Activated naive CD4-positive, alpha-beta T cell treated with anti-CD3 and anti-CD28 coated beads for 36 hours (primary cell): ENCODE measurements at regions of chr16 and their contacts with region 1.

Region 1: GRCh38 chr16:79269211-79269863 is 331.2 kb downstream of the MAF start:
- DNase-seq: peak; percentile 90
- H3K4me3 Mint-ChIP-seq: peak overlapping the region; percentile 30
- H3K27ac Mint-ChIP-seq: peak overlapping the region; percentile 89
- H3K4me1 Mint-ChIP-seq: peaks cover 78% of the 10 kb centered on the region
- H3K27me3 Mint-ChIP-seq: peaks cover 29% of the 10 kb centered on the region

Region 2: GRCh38 chr16:77308163-77308561 is 1961.2 kb before region 1 on chr16:
- CTCF ChIA-PET with region 1: no interaction called
- intact Hi-C with region 1: loop called (anchors 5 kb)
- DNase-seq: peak; percentile 10
- H3K4me3 Mint-ChIP-seq: no peak overlapping the region
- H3K27ac Mint-ChIP-seq: peak overlapping the region; percentile 83
- H3K4me1 Mint-ChIP-seq: peaks cover 19% of the 10 kb centered on the region
- H3K27me3 Mint-ChIP-seq: peaks cover 20% of the 10 kb centered on the region

Region 3: GRCh38 chr16:77816293-77816692 is 1453.0 kb before region 1 on chr16:
- CTCF ChIA-PET with region 1: no interaction called
- intact Hi-C with region 1: no loop called
- DNase-seq: no peak
- H3K4me3 Mint-ChIP-seq: no peak overlapping the region
- H3K27ac Mint-ChIP-seq: no peak overlapping the region
- H3K4me1 Mint-ChIP-seq: no peaks in the 10 kb centered on the region
- H3K27me3 Mint-ChIP-seq: peaks cover 12% of the 10 kb centered on the region

Region 4: GRCh38 chr16:79076047-79076767 is 193.1 kb before region 1 on chr16:
- CTCF ChIA-PET with region 1: no interaction called
- intact Hi-C with region 1: loop called (anchors 2 kb)
- DNase-seq: peak; percentile 33
- H3K4me3 Mint-ChIP-seq: peak overlapping the region; percentile 25
- H3K27ac Mint-ChIP-seq: peak overlapping the region; percentile 83
- H3K4me1 Mint-ChIP-seq: peaks cover 43% of the 10 kb centered on the region
- H3K27me3 Mint-ChIP-seq: peaks cover 7% of the 10 kb centered on the region

Region 5: GRCh38 chr16:79283578-79283977 is 14.2 kb after region 1 on chr16:
- CTCF ChIA-PET with region 1: interaction called, 14 read pairs
- intact Hi-C with region 1: loop called (anchors 1 kb)
- DNase-seq: peak; percentile 39
- H3K4me3 Mint-ChIP-seq: no peak overlapping the region
- H3K27ac Mint-ChIP-seq: no peak overlapping the region
- H3K4me1 Mint-ChIP-seq: peaks cover 71% of the 10 kb centered on the region
- H3K27me3 Mint-ChIP-seq: peaks cover 8% of the 10 kb centered on the region

Region 6: DNA sequence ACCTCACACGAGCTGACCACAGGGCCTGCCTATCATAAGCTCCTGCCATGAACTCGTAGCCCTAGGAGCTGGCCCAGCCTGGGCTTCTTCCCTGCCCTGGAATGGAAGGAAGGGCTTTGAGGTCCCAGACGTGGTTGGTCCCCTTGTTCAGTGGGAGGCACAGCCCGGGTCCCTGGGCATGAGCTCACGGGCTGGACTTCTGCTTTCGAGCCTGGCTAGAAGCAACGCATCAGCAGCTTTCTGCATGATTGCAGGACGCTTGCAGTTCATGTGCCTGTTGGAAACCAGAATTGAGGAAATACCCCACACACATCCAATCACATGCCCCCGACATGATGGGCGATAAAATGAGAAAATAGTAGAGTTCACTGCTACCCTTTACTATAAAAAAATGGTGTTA is 37.9 kb after region 1 on chr16:
- CTCF ChIA-PET with region 1: no interaction called
- intact Hi-C with region 1: no loop called
- DNase-seq: no peak
- H3K4me3 Mint-ChIP-seq: no peak overlapping the region
- H3K27ac Mint-ChIP-seq: no peak overlapping the region
- H3K4me1 Mint-ChIP-seq: peaks cover 8% of the 10 kb centered on the region
- H3K27me3 Mint-ChIP-seq: peaks cover 16% of the 10 kb centered on the region

Region 7: DNA sequence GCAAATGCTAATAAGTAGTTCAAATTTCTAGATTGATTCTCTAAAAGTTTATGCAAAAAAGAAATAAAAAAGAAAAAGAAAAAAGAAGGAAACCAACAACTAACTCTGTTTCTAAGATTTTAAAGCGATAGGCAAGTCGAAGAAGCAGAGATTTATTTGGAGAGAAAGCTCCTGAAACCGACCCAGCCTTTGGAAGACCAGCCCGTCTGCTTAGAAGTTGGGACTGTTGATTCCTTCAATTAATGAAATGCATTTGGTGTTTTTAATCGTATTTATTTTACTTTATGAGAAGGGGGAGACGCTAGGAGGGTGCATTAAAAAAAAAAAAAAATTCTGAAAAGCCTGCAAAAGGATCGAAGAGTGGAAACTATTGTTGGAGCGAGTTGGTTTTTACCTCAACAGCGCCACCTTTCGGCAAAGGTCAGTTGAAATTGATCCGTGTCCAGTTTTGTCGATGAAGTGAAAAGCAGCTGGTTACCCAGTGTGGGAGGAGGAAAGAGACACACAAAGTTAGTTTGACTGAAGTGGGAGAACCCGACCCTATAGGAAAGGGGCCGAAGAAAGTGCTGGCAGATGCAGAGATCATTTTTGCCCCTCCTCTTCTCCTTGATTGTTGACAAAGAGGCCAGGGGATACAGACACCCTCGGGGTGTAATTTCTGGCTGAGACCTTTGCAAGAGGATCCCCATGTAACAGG is 332.7 kb after region 1 on chr16:
- CTCF ChIA-PET with region 1: interaction called, 3 read pairs
- intact Hi-C with region 1: loop called (anchors 1 kb)
- DNase-seq: peak; percentile 90
- H3K4me3 Mint-ChIP-seq: peak overlapping the region; percentile 81
- H3K27ac Mint-ChIP-seq: no peak overlapping the region
- H3K4me1 Mint-ChIP-seq: peaks cover 18% of the 10 kb centered on the region
- H3K27me3 Mint-ChIP-seq: peaks cover 33% of the 10 kb centered on the region

Region 8: GRCh38 chr16:80518436-80518835 is 1249.1 kb after region 1 on chr16:
- CTCF ChIA-PET with region 1: no interaction called
- intact Hi-C with region 1: loop called (anchors 5 kb)
- DNase-seq: peak; percentile 71
- H3K4me3 Mint-ChIP-seq: no peak overlapping the region
- H3K27ac Mint-ChIP-seq: no peak overlapping the region
- H3K4me1 Mint-ChIP-seq: peaks cover 21% of the 10 kb centered on the region
- H3K27me3 Mint-ChIP-seq: peaks cover 20% of the 10 kb centered on the region